Caco-2 (cell line): ENCODE measurements at regions of chr21 and their contacts with region 1.

Region 1: GRCh38 chr21:36156339-36156814 is 247 bp upstream of the DOP1B start:
- DNase-seq: peak; percentile 98 to 99
- H3K4me3 ChIP-seq: peak overlapping the region; percentile 89
- H3K4me3 Mint-ChIP-seq: peak overlapping the region; percentile 83
- H3K27ac Mint-ChIP-seq: peak overlapping the region; percentile 84
- H3K4me1 ChIP-seq: peaks cover 5% of the 10 kb centered on the region
- H3K4me1 Mint-ChIP-seq: peaks cover 20% of the 10 kb centered on the region
- H3K27me3 ChIP-seq: no peaks in the 10 kb centered on the region
- H3K27me3 Mint-ChIP-seq: no peaks in the 10 kb centered on the region
- CTCF ChIP-seq: no peak

Region 2: GRCh38 chr21:36141513-36141925 is 14.9 kb before region 1 on chr21:
- CTCF ChIA-PET with region 1: interaction called, 4 read pairs
- POLR2A ChIA-PET with region 1: interaction called, 7 read pairs
- intact Hi-C with region 1: loop called (anchors 1 kb)
- DNase-seq: peak; percentile 95 to 96
- H3K4me3 ChIP-seq: no peak overlapping the region
- H3K4me3 Mint-ChIP-seq: no peak overlapping the region
- H3K27ac Mint-ChIP-seq: no peak overlapping the region
- H3K4me1 ChIP-seq: peaks cover 4% of the 10 kb centered on the region
- H3K4me1 Mint-ChIP-seq: peaks cover 15% of the 10 kb centered on the region
- H3K27me3 ChIP-seq: no peaks in the 10 kb centered on the region
- H3K27me3 Mint-ChIP-seq: no peaks in the 10 kb centered on the region
- CTCF ChIP-seq: peak; percentile 64 to 78

Region 3: GRCh38 chr21:36203617-36203917 is 47.2 kb after region 1 on chr21:
- CTCF ChIA-PET with region 1: interaction called, 5 read pairs
- POLR2A ChIA-PET with region 1: interaction called, 10 read pairs
- intact Hi-C with region 1: loop called (anchors 2 kb)
- DNase-seq: peak in 1 of 2 experiments; percentile 54
- H3K4me3 ChIP-seq: no peak overlapping the region
- H3K4me3 Mint-ChIP-seq: no peak overlapping the region
- H3K27ac Mint-ChIP-seq: peak overlapping the region; percentile 84
- H3K4me1 ChIP-seq: peaks cover 37% of the 10 kb centered on the region
- H3K4me1 Mint-ChIP-seq: peaks cover 35% of the 10 kb centered on the region
- H3K27me3 ChIP-seq: no peaks in the 10 kb centered on the region
- H3K27me3 Mint-ChIP-seq: no peaks in the 10 kb centered on the region
- CTCF ChIP-seq: no peak

Region 4: DNA sequence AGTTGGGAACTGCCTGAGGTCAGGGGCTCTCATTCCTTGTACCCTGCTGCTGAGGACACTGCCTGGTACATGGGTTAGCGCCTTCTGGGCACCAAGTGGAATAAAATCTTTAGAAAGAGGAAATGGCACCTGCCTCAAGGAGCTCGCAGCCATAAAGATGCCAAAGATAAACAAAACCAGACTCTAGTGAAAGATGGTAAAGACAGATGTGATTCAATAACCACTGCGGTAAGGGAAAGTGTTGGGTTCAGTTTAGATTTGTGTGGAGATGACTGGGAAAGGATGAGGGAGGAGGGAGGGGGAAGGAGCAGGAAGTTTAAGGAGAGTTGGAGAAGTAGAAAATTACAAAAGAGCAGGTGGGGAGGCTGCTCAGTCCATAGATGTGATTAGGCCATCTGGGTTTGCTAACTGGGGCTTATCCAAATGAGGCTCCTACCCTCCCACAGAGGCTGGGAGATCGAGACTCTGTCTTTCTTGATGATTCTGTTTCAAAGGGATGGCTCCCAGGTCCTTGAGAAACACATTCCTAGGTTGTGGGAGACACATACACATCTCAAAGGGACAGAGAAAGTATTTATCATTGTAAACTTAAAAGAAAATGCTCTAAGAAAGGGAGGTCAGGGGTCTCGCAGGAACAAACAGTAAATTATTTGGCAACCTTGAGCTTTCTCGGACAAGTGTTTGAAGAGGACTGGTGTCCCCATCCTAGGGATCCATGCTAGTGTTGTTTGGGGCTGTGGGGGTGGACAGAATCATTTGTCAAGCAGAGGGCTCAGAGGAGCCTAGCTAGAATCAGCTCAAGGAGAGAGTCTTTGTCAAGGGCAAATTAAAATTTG is 97.9 kb after region 1 on chr21:
- CTCF ChIA-PET with region 1: no interaction called
- POLR2A ChIA-PET with region 1: interaction called, 18 read pairs
- intact Hi-C with region 1: no loop called
- DNase-seq: peak in 1 of 2 experiments; percentile 37
- H3K4me3 ChIP-seq: no peak overlapping the region
- H3K4me3 Mint-ChIP-seq: no peak overlapping the region
- H3K27ac Mint-ChIP-seq: peak overlapping the region; percentile 54
- H3K4me1 ChIP-seq: no peaks in the 10 kb centered on the region
- H3K4me1 Mint-ChIP-seq: peaks cover 25% of the 10 kb centered on the region
- H3K27me3 ChIP-seq: no peaks in the 10 kb centered on the region
- H3K27me3 Mint-ChIP-seq: no peaks in the 10 kb centered on the region
- CTCF ChIP-seq: no peak

Region 5: GRCh38 chr21:36330904-36331303 is 174.5 kb after region 1 on chr21:
- CTCF ChIA-PET with region 1: interaction called, 3 read pairs
- POLR2A ChIA-PET with region 1: no interaction called
- intact Hi-C with region 1: loop called (anchors 1 kb)
- DNase-seq: peak; percentile 53 to 62
- H3K4me3 ChIP-seq: no peak overlapping the region
- H3K4me3 Mint-ChIP-seq: no peak overlapping the region
- H3K27ac Mint-ChIP-seq: peak overlapping the region; percentile 1
- H3K4me1 ChIP-seq: no peaks in the 10 kb centered on the region
- H3K4me1 Mint-ChIP-seq: peaks cover 12% of the 10 kb centered on the region
- H3K27me3 ChIP-seq: no peaks in the 10 kb centered on the region
- H3K27me3 Mint-ChIP-seq: no peaks in the 10 kb centered on the region
- CTCF ChIP-seq: peak; percentile 77 to 81